Common myeloid progenitor, CD34-positive (primary cell): ENCODE measurements at regions of chr17 and their contacts with region 1.

Region 1: DNA sequence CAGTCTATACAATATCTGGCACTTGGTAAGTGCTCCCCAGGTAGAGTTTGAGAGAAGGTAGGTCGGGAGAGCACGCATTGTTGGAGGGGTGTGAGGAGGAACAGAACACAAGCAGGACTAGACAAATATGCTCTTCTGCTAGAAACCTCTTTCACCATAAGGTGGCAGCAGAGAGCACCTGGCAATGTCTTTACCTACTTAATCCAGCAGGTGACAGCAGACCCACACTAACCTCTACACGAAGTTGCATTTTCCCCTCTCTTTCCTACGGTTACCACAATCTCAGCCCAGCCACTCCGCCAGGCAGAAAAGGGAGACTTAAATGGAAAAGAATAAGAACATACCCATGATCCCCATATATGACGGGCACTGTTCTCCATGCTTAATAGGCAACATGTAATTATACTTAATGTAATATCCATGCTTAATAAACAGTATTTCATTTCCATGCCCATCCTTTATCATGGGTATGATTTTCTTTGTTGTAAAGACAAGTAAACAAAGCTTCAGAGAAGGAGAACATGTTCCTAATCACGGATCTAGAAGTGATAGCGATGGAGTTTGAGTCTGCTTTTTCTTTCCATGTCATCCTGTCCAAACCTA is 55.1 kb upstream of the CCL2 start:
- DNase-seq: peak; percentile 82 to 91 (median 84)
- H3K4me3 ChIP-seq: no peak overlapping the region
- H3K27ac ChIP-seq: no peak overlapping the region
- H3K4me1 ChIP-seq: peaks cover 0 to 2% (median 0%) of the 10 kb centered on the region in 4 experiments
- H3K27me3 ChIP-seq: peaks cover 0 to 13% (median 0%) of the 10 kb centered on the region in 5 experiments

Region 2: GRCh38 chr17:34098699-34099098 is 101.3 kb before region 1 on chr17:
- CTCF ChIA-PET with region 1: no interaction called
- POLR2A ChIA-PET with region 1: no interaction called
- DNase-seq: no peak
- H3K4me3 ChIP-seq: no peak overlapping the region
- H3K27ac ChIP-seq: no peak overlapping the region
- H3K4me1 ChIP-seq: no peaks in the 10 kb centered on the region
- H3K27me3 ChIP-seq: peaks cover 0 to 2% (median 0%) of the 10 kb centered on the region in 5 experiments

Region 3: GRCh38 chr17:34177642-34178041 is 22.4 kb before region 1 on chr17:
- CTCF ChIA-PET with region 1: no interaction called
- POLR2A ChIA-PET with region 1: no interaction called
- DNase-seq: peak in 2 of 3 donors; percentile 15 to 30
- H3K4me3 ChIP-seq: no peak overlapping the region
- H3K27ac ChIP-seq: no peak overlapping the region
- H3K4me1 ChIP-seq: peaks cover 0 to 37% (median 20%) of the 10 kb centered on the region in 4 experiments
- H3K27me3 ChIP-seq: no peaks in the 10 kb centered on the region

Region 4: GRCh38 chr17:34220754-34221395 is 20.8 kb after region 1 on chr17:
- CTCF ChIA-PET with region 1: interaction called, 12 read pairs
- POLR2A ChIA-PET with region 1: no interaction called
- DNase-seq: peak in 2 of 3 donors; percentile 24 to 27
- H3K4me3 ChIP-seq: no peak overlapping the region
- H3K27ac ChIP-seq: no peak overlapping the region
- H3K4me1 ChIP-seq: peaks cover 0 to 5% (median 1%) of the 10 kb centered on the region in 4 experiments
- H3K27me3 ChIP-seq: no peaks in the 10 kb centered on the region

Region 5: GRCh38 chr17:34349751-34350150 is 149.7 kb after region 1 on chr17:
- CTCF ChIA-PET with region 1: interaction called, 318 read pairs
- POLR2A ChIA-PET with region 1: no interaction called
- DNase-seq: no peak
- H3K4me3 ChIP-seq: no peak overlapping the region
- H3K27ac ChIP-seq: no peak overlapping the region
- H3K4me1 ChIP-seq: no peaks in the 10 kb centered on the region
- H3K27me3 ChIP-seq: peaks cover 0 to 4% (median 0%) of the 10 kb centered on the region in 5 experiments

Region 6: DNA sequence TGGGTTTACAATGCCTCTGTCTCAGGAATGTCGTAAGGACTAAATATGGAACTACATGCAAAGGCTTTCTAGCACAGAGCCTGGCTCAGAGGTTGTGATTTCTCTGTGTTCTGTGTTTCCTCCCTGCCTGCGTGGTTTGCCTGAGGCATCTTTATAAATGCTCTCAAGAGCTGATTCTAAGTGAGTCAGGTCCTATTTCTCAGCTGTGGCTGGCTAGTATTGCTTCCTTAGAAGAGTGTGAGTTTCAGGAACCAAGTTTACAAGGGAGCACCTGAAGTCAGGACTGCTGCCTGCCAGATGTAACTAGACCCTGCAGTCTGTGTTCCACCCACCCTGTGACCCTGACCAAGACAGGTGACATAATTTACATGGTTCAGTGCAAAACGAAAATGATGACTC is 171.0 kb after region 1 on chr17:
- CTCF ChIA-PET with region 1: interaction called, 12 read pairs
- POLR2A ChIA-PET with region 1: no interaction called
- DNase-seq: peak in 2 of 3 donors; percentile 47 to 55
- H3K4me3 ChIP-seq: no peak overlapping the region
- H3K27ac ChIP-seq: no peak overlapping the region
- H3K4me1 ChIP-seq: peaks cover 0 to 53% (median 38%) of the 10 kb centered on the region in 4 experiments
- H3K27me3 ChIP-seq: no peaks in the 10 kb centered on the region